ENCODE measurements at regions of chr1 and their contacts with region 1.

Region 1: GRCh38 chr1:46442317-46443161 is 47.1 kb upstream of the DMBX1 start:
- DNase-seq: peak; percentile 84
- ATAC-seq: peak; percentile 80
- H3K4me3 Mint-ChIP-seq: peak overlapping the region; percentile 75
- H3K27ac Mint-ChIP-seq: peak overlapping the region; percentile 76
- H3K4me1 Mint-ChIP-seq: peaks cover 8% of the 10 kb centered on the region
- H3K27me3 Mint-ChIP-seq: peaks cover 11% of the 10 kb centered on the region

Region 2: DNA sequence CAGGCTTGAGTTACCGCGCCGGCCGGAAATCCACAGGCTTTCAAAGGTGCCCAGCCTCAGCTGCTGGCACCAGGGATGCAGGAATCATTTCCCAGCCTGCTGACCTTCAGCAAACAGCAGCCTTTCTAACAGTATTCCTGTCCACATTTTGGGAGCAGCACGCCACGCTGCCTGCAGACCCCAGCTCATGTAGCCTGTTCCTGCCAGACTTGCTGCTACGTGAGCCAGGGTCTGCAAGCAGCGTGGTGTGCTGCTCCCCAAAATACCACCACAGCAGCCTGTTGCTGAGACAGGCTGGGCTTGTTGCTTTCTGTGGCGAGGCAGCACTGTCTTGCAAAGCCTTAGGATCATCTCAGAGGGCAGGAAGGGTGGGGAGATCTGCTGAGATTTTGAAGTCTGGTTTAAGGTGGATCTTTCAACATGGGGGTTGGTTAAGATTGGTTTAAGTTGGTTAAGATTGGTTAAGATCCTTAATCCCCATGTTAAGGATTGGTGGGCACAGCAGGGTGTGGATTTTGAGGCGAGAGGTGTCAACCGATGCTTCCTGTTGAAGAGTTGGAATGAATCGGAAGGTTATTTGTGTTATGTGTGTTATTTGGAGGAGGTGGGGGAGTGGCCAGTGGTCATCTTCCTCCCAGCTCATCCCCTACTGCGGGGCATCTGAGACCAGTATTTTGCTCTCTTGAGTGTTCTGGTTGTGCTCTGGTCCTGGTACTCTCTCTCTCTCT is 35.5 kb before region 1 on chr1:
- CTCF ChIA-PET with region 1: interaction called, 7 read pairs
- POLR2A ChIA-PET with region 1: no interaction called
- intact Hi-C with region 1: loop called in 1 of 2 experiments (anchors 1 kb)
- DNase-seq: no peak
- ATAC-seq: no peak
- H3K4me3 Mint-ChIP-seq: no peak overlapping the region
- H3K27ac Mint-ChIP-seq: no peak overlapping the region
- H3K4me1 Mint-ChIP-seq: no peaks in the 10 kb centered on the region
- H3K27me3 Mint-ChIP-seq: no peaks in the 10 kb centered on the region

Region 3: GRCh38 chr1:46456411-46456963 is 13.9 kb after region 1 on chr1:
- CTCF ChIA-PET with region 1: interaction called, 17 read pairs
- POLR2A ChIA-PET with region 1: no interaction called
- intact Hi-C with region 1: no loop called
- DNase-seq: no peak
- ATAC-seq: no peak
- H3K4me3 Mint-ChIP-seq: no peak overlapping the region
- H3K27ac Mint-ChIP-seq: no peak overlapping the region
- H3K4me1 Mint-ChIP-seq: no peaks in the 10 kb centered on the region
- H3K27me3 Mint-ChIP-seq: peaks cover 31% of the 10 kb centered on the region

Region 4: DNA sequence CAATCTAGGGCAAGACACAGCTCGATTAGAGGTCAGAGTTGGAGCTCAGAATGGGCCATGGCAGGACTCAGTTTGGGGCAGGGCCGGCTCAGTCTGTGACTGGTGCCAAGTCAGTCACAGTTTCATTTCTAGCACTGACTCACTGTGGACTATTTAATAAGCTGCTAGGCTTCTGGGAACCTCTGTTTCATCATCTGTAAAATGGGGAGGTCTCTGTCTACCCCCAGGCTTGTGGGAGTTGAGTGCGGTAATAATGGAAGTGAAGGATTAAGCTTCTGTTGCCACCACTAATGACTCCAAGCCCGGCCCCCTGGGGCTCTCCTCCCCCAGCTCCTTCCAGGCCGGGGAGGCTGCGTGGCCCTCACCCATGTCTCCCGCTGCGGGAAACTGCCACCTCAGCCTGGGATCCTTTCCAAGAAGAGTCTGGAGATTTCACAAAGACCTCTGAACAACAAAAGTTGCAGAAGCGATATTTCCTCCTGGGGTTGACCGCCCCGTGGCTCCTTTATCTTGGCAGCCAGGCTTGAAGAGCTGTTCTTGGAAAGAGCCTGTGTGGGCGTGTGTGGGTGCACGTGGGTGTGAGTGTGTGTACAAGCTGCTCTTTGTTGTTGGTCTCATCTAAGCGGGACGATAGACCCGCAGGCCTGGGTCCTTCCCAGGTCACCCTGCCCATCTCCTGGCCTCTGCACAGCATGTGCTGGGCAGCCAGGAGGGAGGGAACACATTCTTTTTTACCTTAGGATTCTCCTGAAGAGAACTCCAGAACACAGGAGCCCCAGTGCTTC is 79.8 kb after region 1 on chr1:
- CTCF ChIA-PET with region 1: interaction called, 105 read pairs
- POLR2A ChIA-PET with region 1: no interaction called
- intact Hi-C with region 1: no loop called
- DNase-seq: peak; percentile 69
- ATAC-seq: peak; percentile 97
- H3K4me3 Mint-ChIP-seq: peak overlapping the region; percentile 10
- H3K27ac Mint-ChIP-seq: peak overlapping the region; percentile 73
- H3K4me1 Mint-ChIP-seq: peaks cover 14% of the 10 kb centered on the region
- H3K27me3 Mint-ChIP-seq: peaks cover 29% of the 10 kb centered on the region

Region 5: GRCh38 chr1:46724991-46725735 is 282.6 kb after region 1 on chr1:
- CTCF ChIA-PET with region 1: interaction called, 4 read pairs
- POLR2A ChIA-PET with region 1: no interaction called
- intact Hi-C with region 1: loop called (anchors 1 to 5 kb)
- DNase-seq: peak; percentile 80
- ATAC-seq: peak; percentile 98
- H3K4me3 Mint-ChIP-seq: no peak overlapping the region
- H3K27ac Mint-ChIP-seq: no peak overlapping the region
- H3K4me1 Mint-ChIP-seq: no peaks in the 10 kb centered on the region
- H3K27me3 Mint-ChIP-seq: peaks cover 29% of the 10 kb centered on the region